BJ (cell line): ENCODE measurements at regions of chr11 and their contacts with region 1.

Region 1: GRCh38 chr11:86182976-86183584 is 61.5 kb upstream of the EED start:
- DNase-seq: no peak
- H3K4me3 ChIP-seq: no peak overlapping the region
- H3K27me3 ChIP-seq: no peaks in the 10 kb centered on the region
- CTCF ChIP-seq: no peak

Region 2: DNA sequence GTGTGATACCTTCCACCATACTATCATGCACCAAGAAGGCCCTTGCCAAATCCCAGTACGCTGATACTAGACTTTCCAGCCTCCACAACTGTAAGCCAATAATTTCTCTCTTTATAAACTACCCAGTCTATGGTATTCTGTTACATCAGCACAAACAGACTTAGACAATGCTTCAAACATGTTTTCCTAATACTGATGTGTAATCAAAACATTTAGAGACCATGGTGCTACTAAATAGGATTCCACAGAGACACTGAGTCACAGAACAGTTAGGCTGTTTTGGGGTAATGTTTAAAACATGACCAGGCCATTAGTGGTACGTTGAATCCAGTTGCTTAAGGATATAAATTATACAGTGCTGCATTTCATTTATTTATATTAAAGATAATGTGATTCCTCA is 217.9 kb before region 1 on chr11:
- CTCF ChIA-PET with region 1: no interaction called
- POLR2A ChIA-PET with region 1: interaction called, 16 read pairs
- DNase-seq: no peak
- H3K4me3 ChIP-seq: no peak overlapping the region
- H3K27me3 ChIP-seq: no peaks in the 10 kb centered on the region
- CTCF ChIP-seq: no peak